GM12878 (cell line): ENCODE measurements at regions of chr2 and their contacts with region 1.

Region 1: DNA sequence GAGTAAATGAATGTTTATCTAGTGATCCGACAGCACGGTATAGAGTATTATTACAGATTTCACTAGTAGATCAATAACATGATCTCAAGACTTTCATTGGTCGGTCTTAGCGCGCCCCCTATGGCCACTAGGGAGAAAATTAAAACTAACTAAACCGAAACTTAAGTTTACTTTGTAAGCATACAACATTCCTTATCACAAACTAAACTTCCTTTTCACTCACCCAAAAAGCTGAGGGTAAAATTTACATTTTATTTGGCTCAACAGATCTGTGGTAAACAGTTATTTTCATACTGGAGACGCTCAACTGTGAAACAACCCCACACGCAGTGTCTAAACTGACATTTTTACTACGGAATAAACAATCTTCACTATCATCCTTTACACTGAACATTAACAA is 215.6 kb upstream of the MAP2 start:
- DNase-seq: no peak
- ATAC-seq: peak; percentile 76
- H3K4me3 ChIP-seq: no peak overlapping the region
- H3K27ac ChIP-seq: no peak overlapping the region
- H3K4me1 ChIP-seq: no peaks in the 10 kb centered on the region
- H3K27me3 ChIP-seq: no peaks in the 10 kb centered on the region
- CTCF ChIP-seq: peak; percentile 56 to 64 (median 62); a peak in 5 of 6 replicates
- EP300 ChIP-seq: no peak
- POLR2A ChIP-seq: no peak
- RAD21 ChIP-seq: peak; percentile 86

Region 2: DNA sequence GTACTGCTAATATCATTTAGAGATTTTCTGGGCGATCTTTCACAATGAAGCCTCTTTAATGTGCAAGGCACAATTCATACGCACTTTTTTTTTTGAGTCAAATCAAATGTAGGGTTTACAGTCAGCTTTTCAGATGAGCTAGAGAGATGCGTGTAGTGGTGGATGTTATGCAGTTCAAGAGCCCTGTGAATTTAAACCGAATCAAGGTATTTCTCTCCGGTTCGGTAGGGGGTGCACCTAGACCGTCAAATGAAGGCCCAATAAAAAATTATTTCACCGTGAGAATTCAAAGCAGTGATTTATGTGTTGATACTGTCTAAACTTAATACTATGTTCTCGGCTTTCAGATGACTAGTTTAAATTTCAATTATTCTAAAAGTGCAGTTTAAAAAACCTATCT is 800.5 kb before region 1 on chr2:
- CTCF ChIA-PET with region 1: interaction called, 9 read pairs
- POLR2A ChIA-PET with region 1: no interaction called
- RAD21 ChIA-PET with region 1: no interaction called
- SMC1A ChIA-PET with region 1: no interaction called
- in situ Hi-C with region 1: no loop called
- intact Hi-C with region 1: loop called (anchors 5 kb)
- DNase-seq: no peak
- ATAC-seq: peak; percentile 73
- H3K4me3 ChIP-seq: no peak overlapping the region
- H3K27ac ChIP-seq: no peak overlapping the region
- H3K4me1 ChIP-seq: no peaks in the 10 kb centered on the region
- H3K27me3 ChIP-seq: peaks cover 0 to 4% of the 10 kb centered on the region in 2 experiments; a peak in 3 of 4 replicates
- CTCF ChIP-seq: peak; percentile 15 to 61 (median 23); a peak in 4 of 6 replicates
- EP300 ChIP-seq: no peak
- POLR2A ChIP-seq: no peak
- RAD21 ChIP-seq: peak; percentile 60

Region 3: GRCh38 chr2:208820014-208820688 is 388.1 kb before region 1 on chr2:
- CTCF ChIA-PET with region 1: no interaction called
- POLR2A ChIA-PET with region 1: no interaction called
- RAD21 ChIA-PET with region 1: no interaction called
- SMC1A ChIA-PET with region 1: interaction called, 3 read pairs
- in situ Hi-C with region 1: no loop called
- intact Hi-C with region 1: loop called (anchors 5 kb)
- DNase-seq: no peak
- ATAC-seq: peak; percentile 69
- H3K4me3 ChIP-seq: no peak overlapping the region
- H3K27ac ChIP-seq: no peak overlapping the region
- H3K4me1 ChIP-seq: no peaks in the 10 kb centered on the region
- H3K27me3 ChIP-seq: no peaks in the 10 kb centered on the region
- CTCF ChIP-seq: peak in 1 of 3 experiments; percentile 4; a peak in 2 of 6 replicates
- EP300 ChIP-seq: no peak
- POLR2A ChIP-seq: no peak
- RAD21 ChIP-seq: 0 out of 2 replicates have a peak, but pooled peaks have one; percentile 25

Region 4: DNA sequence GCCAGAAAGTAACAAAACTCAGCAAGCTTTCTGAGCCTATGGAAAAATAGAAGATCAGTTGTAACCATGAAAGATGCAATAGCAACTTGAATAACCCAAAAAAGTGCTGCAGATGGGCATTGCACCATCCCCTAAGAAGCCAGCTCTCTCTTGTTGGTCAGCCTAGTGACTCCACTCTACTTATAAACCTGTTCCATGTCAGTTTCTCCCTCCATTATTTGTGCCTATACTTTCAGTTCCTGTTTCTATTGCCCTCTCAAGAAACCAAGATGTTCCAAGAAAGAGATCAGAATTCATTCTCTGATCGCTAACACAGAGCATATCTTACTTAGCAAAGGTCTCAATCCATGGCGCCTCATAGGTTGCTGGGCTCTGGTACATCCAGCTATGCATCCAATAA is 45.3 kb after region 1 on chr2:
- CTCF ChIA-PET with region 1: no interaction called
- POLR2A ChIA-PET with region 1: no interaction called
- RAD21 ChIA-PET with region 1: no interaction called
- SMC1A ChIA-PET with region 1: no interaction called
- in situ Hi-C with region 1: no loop called
- intact Hi-C with region 1: no loop called
- DNase-seq: no peak
- ATAC-seq: no peak
- H3K4me3 ChIP-seq: no peak overlapping the region
- H3K27ac ChIP-seq: no peak overlapping the region
- H3K4me1 ChIP-seq: no peaks in the 10 kb centered on the region
- H3K27me3 ChIP-seq: no peaks in the 10 kb centered on the region
- CTCF ChIP-seq: no peak
- EP300 ChIP-seq: no peak
- POLR2A ChIP-seq: no peak
- RAD21 ChIP-seq: no peak